Panc1 (cell line): ENCODE measurements at regions of chr18 and their contacts with region 1.

Region 1: GRCh38 chr18:58161659-58162058 is 117.6 kb downstream of the NEDD4L start:
- DNase-seq: no peak
- ATAC-seq: no peak
- H3K4me3 ChIP-seq: no peak overlapping the region
- H3K27ac ChIP-seq: peak overlapping the region; percentile 17; the same call in 1 of the 2 replicates
- H3K4me1 ChIP-seq: no peaks in the 10 kb centered on the region
- H3K27me3 ChIP-seq: no peaks in the 10 kb centered on the region
- CTCF ChIP-seq: no peak

Region 2: DNA sequence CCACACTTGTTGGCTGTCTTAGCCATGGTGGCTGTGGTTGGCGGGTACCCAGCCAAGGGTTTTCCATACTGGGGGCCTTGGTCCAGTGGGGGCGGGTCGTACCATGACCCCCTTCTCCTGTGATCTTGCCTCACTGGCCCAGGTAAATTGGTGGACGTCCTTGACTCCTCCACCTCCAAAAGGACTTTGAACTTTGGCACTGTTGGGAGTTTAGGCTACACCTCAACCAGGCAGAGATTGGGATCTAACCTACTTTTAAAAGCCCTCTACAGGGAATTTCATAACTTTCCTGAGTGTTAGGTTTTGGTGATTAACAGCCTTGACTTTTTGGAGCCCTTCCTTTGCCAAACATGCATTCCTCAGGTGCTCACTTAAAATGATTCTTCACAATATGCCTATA is 10.9 kb before region 1 on chr18:
- CTCF ChIA-PET with region 1: no interaction called
- POLR2A ChIA-PET with region 1: interaction called, 10 read pairs
- in situ Hi-C with region 1: no loop called
- intact Hi-C with region 1: no loop called
- DNase-seq: no peak
- ATAC-seq: no peak
- H3K4me3 ChIP-seq: no peak overlapping the region
- H3K27ac ChIP-seq: no peak overlapping the region
- H3K4me1 ChIP-seq: peaks cover 6% of the 10 kb centered on the region
- H3K27me3 ChIP-seq: no peaks in the 10 kb centered on the region
- CTCF ChIP-seq: no peak